GM12878 (cell line): ENCODE measurements at regions of chr11 and their contacts with region 1.

Region 1: GRCh38 chr11:34366522-34366921 is 8.7 kb upstream of the ABTB2 start:
- DNase-seq: no peak
- ATAC-seq: no peak
- H3K4me3 ChIP-seq: no peak overlapping the region
- H3K27ac ChIP-seq: no peak overlapping the region
- H3K4me1 ChIP-seq: no peaks in the 10 kb centered on the region
- H3K27me3 ChIP-seq: no peaks in the 10 kb centered on the region
- CTCF ChIP-seq: peak; percentile 45 to 55 (median 50); a peak in 5 of 6 replicates
- EP300 ChIP-seq: no peak
- POLR2A ChIP-seq: no peak
- RAD21 ChIP-seq: peak; percentile 56

Region 2: GRCh38 chr11:34380696-34381095 is 14.2 kb after region 1 on chr11:
- CTCF ChIA-PET with region 1: interaction called, 10 read pairs
- POLR2A ChIA-PET with region 1: no interaction called
- RAD21 ChIA-PET with region 1: no interaction called
- SMC1A ChIA-PET with region 1: no interaction called
- in situ Hi-C with region 1: no loop called
- intact Hi-C with region 1: no loop called
- DNase-seq: no peak
- ATAC-seq: no peak
- H3K4me3 ChIP-seq: no peak overlapping the region
- H3K27ac ChIP-seq: no peak overlapping the region
- H3K4me1 ChIP-seq: no peaks in the 10 kb centered on the region
- H3K27me3 ChIP-seq: no peaks in the 10 kb centered on the region
- CTCF ChIP-seq: no peak
- EP300 ChIP-seq: no peak
- POLR2A ChIP-seq: no peak
- RAD21 ChIP-seq: no peak

Region 3: DNA sequence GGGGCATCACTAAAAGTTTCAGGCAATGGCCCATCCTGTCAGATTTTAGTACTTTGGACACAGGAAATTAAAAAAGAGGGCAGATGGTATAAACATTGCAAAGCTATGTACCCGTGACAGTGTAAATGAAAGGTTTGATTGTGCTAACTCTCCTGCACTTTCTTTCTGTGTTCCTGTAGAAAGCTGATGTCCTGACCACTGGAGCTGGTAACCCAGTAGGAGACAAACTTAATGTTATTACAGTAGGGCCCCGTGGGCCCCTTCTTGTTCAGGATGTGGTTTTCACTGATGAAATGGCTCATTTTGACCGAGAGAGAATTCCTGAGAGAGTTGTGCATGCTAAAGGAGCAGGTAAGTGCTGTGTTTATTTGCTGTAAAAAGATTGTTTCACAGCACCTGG is 82.5 kb after region 1 on chr11:
- CTCF ChIA-PET with region 1: interaction called, 12 read pairs
- POLR2A ChIA-PET with region 1: no interaction called
- RAD21 ChIA-PET with region 1: no interaction called
- SMC1A ChIA-PET with region 1: no interaction called
- in situ Hi-C with region 1: no loop called
- intact Hi-C with region 1: no loop called
- DNase-seq: no peak
- ATAC-seq: peak; percentile 52
- H3K4me3 ChIP-seq: no peak overlapping the region
- H3K27ac ChIP-seq: no peak overlapping the region
- H3K4me1 ChIP-seq: peaks cover 17% of the 10 kb centered on the region
- H3K27me3 ChIP-seq: no peaks in the 10 kb centered on the region
- CTCF ChIP-seq: no peak
- EP300 ChIP-seq: no peak
- POLR2A ChIP-seq: no peak
- RAD21 ChIP-seq: no peak

Region 4: GRCh38 chr11:34468209-34468841 is 101.8 kb after region 1 on chr11:
- CTCF ChIA-PET with region 1: interaction called, 43 read pairs
- POLR2A ChIA-PET with region 1: no interaction called
- RAD21 ChIA-PET with region 1: interaction called, 22 read pairs
- SMC1A ChIA-PET with region 1: interaction called, 30 read pairs
- in situ Hi-C with region 1: no loop called
- intact Hi-C with region 1: loop called (anchors 1 kb)
- DNase-seq: no peak
- ATAC-seq: peak; percentile 62
- H3K4me3 ChIP-seq: no peak overlapping the region
- H3K27ac ChIP-seq: no peak overlapping the region
- H3K4me1 ChIP-seq: no peaks in the 10 kb centered on the region
- H3K27me3 ChIP-seq: no peaks in the 10 kb centered on the region
- CTCF ChIP-seq: peak; percentile 55 to 73 (median 67)
- EP300 ChIP-seq: no peak
- POLR2A ChIP-seq: no peak
- RAD21 ChIP-seq: peak; percentile 67

Region 5: DNA sequence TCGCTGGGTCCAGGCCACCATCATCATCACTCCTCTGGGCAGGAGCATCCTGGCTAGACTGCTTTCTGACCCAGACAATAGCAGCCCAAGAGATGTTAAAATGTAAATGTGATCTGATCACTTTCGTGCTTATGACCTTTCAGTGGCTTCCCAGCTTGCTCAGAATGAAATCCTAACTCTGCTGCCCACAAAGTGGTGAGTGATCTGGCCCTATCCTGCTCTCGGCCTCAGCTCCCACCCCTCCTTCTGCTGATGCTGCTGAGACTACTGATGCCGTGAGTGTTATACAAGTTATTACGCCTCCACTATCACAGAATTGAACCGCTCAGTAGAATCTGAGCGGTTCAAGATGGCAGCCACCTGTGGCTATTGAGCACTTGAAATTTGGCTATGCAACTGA is 120.9 kb after region 1 on chr11:
- CTCF ChIA-PET with region 1: interaction called, 177 read pairs
- POLR2A ChIA-PET with region 1: no interaction called
- RAD21 ChIA-PET with region 1: interaction called, 17 read pairs
- SMC1A ChIA-PET with region 1: interaction called, 34 read pairs
- in situ Hi-C with region 1: loop called (anchors 5 kb)
- intact Hi-C with region 1: no loop called
- DNase-seq: no peak
- ATAC-seq: peak; percentile 58
- H3K4me3 ChIP-seq: no peak overlapping the region
- H3K27ac ChIP-seq: no peak overlapping the region
- H3K4me1 ChIP-seq: peaks cover 4% of the 10 kb centered on the region; the same call in 1 of the 2 replicates
- H3K27me3 ChIP-seq: no peaks in the 10 kb centered on the region; a peak in 1 of 4 replicates
- CTCF ChIP-seq: no peak
- EP300 ChIP-seq: no peak
- POLR2A ChIP-seq: no peak
- RAD21 ChIP-seq: no peak

Region 6: DNA sequence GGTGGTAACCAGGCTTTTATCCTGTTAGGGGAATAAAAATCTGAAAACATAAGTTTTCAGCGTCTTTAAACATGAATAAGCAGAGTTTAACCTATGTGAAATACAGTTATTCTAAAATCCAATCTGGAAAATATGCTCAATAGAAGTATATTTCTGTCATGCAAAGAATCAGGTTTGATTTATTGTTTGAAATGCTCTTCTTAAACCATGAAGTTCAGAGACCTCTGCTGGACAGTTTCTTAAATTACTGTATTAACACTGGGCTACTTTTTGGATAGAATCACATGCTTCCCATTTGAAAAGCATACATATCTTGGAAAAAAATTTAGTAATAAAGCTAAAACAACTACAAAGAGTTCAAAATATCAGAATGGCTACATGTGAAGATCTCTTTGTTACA is 524.3 kb after region 1 on chr11:
- CTCF ChIA-PET with region 1: no interaction called
- POLR2A ChIA-PET with region 1: no interaction called
- RAD21 ChIA-PET with region 1: no interaction called
- SMC1A ChIA-PET with region 1: no interaction called
- in situ Hi-C with region 1: no loop called
- intact Hi-C with region 1: loop called (anchors 5 kb)
- DNase-seq: no peak
- ATAC-seq: peak; percentile 41; the same call in 1 of the 3 replicates
- H3K4me3 ChIP-seq: no peak overlapping the region
- H3K27ac ChIP-seq: no peak overlapping the region
- H3K4me1 ChIP-seq: no peaks in the 10 kb centered on the region
- H3K27me3 ChIP-seq: no peaks in the 10 kb centered on the region
- CTCF ChIP-seq: peak; percentile 19 to 57 (median 41); a peak in 5 of 6 replicates
- EP300 ChIP-seq: no peak
- POLR2A ChIP-seq: no peak
- RAD21 ChIP-seq: peak; percentile 66